Panc1 (cell line): ENCODE measurements at regions of chr6 and their contacts with region 1.

Region 1: DNA sequence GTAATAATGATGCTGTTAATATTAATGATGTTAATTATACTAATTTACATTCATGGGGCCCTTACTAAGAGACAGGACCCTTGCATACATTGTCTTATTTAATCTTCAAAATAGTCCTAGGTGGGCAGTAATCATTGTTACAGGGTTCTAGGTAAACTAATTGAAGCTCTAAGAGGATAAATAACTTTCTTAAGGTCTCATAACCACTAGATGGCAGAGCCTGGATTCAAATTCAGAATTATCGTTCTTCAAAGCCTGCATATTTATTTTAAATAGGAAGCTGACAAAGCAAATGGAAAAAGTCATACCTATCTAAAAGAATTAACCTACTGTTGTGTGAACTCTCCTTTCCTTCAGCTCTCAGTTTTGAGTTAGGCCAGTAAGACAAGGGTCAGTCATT is 23.5 kb downstream of the PTCHD4 start:
- DNase-seq: peak; percentile 20
- ATAC-seq: no peak
- H3K4me3 ChIP-seq: no peak overlapping the region
- H3K27ac ChIP-seq: no peak overlapping the region
- H3K4me1 ChIP-seq: no peaks in the 10 kb centered on the region
- H3K27me3 ChIP-seq: no peaks in the 10 kb centered on the region
- CTCF ChIP-seq: peak; percentile 47; the same call in 1 of the 2 replicates

Region 2: GRCh38 chr6:47789553-47789952 is 297.9 kb before region 1 on chr6:
- CTCF ChIA-PET with region 1: no interaction called
- POLR2A ChIA-PET with region 1: no interaction called
- in situ Hi-C with region 1: no loop called
- intact Hi-C with region 1: no loop called
- DNase-seq: no peak
- ATAC-seq: no peak
- H3K4me3 ChIP-seq: no peak overlapping the region
- H3K27ac ChIP-seq: no peak overlapping the region
- H3K4me1 ChIP-seq: no peaks in the 10 kb centered on the region
- H3K27me3 ChIP-seq: peaks cover 5% of the 10 kb centered on the region
- CTCF ChIP-seq: no peak

Region 3: DNA sequence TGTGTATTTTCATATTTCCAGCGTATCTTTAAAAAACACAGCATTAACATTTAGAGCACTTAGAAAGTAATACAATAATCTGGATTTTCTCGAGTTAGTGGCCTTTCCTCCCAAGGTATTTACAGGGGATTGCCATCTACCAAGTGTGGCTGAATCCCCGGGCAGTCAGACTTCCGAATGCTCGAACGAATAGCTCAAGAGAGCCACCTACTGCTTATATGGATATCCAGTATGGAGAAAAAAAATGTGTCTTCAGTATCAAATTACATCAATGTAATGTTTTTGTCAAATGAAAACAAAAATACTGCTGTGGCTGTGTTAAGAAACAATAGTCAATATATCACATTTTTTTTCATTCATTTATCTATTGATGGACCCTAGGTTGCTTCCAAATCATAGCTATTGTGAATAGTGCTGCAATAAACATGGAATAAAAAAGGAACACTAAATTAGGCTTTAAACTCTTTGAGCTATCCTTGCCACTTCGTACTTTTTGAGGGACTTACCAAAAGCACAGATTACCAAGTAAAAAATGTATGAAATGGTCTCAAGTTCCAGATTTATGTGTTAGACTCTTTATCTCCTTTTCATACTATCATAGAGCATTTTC is 678.0 kb after region 1 on chr6:
- CTCF ChIA-PET with region 1: interaction called, 3 read pairs
- POLR2A ChIA-PET with region 1: no interaction called
- in situ Hi-C with region 1: no loop called
- intact Hi-C with region 1: loop called (anchors 5 kb)
- DNase-seq: peak; percentile 38
- ATAC-seq: no peak; the same call in 1 of the 2 replicates
- H3K4me3 ChIP-seq: no peak overlapping the region
- H3K27ac ChIP-seq: no peak overlapping the region; the same call in 1 of the 2 replicates
- H3K4me1 ChIP-seq: no peaks in the 10 kb centered on the region
- H3K27me3 ChIP-seq: no peaks in the 10 kb centered on the region
- CTCF ChIP-seq: peak; percentile 71

Region 4: GRCh38 chr6:48951913-48952312 is 864.5 kb after region 1 on chr6:
- CTCF ChIA-PET with region 1: no interaction called
- POLR2A ChIA-PET with region 1: no interaction called
- in situ Hi-C with region 1: no loop called
- intact Hi-C with region 1: no loop called
- DNase-seq: no peak
- ATAC-seq: no peak
- H3K4me3 ChIP-seq: no peak overlapping the region
- H3K27ac ChIP-seq: no peak overlapping the region
- H3K4me1 ChIP-seq: no peaks in the 10 kb centered on the region
- H3K27me3 ChIP-seq: no peaks in the 10 kb centered on the region
- CTCF ChIP-seq: no peak